K562 (cell line): ENCODE measurements at regions of chr17 and their contacts with region 1.

Region 1: GRCh38 chr17:45573924-45574770 is 83.6 kb upstream of the PLEKHM1 start:
- DNase-seq: peak in 3 of 4 experiments; percentile 4 to 8 (median 5)
- ATAC-seq: no peak
- H3K4me3 ChIP-seq: no peak overlapping the region
- H3K27ac ChIP-seq: no peak overlapping the region
- H3K4me1 ChIP-seq: no peaks in the 10 kb centered on the region; a peak in 1 of 5 replicates
- H3K27me3 ChIP-seq: no peaks in the 10 kb centered on the region
- CTCF ChIP-seq: no peak
- EP300 ChIP-seq: no peak
- POLR2A ChIP-seq: no peak
- RAD21 ChIP-seq: no peak

Region 2: DNA sequence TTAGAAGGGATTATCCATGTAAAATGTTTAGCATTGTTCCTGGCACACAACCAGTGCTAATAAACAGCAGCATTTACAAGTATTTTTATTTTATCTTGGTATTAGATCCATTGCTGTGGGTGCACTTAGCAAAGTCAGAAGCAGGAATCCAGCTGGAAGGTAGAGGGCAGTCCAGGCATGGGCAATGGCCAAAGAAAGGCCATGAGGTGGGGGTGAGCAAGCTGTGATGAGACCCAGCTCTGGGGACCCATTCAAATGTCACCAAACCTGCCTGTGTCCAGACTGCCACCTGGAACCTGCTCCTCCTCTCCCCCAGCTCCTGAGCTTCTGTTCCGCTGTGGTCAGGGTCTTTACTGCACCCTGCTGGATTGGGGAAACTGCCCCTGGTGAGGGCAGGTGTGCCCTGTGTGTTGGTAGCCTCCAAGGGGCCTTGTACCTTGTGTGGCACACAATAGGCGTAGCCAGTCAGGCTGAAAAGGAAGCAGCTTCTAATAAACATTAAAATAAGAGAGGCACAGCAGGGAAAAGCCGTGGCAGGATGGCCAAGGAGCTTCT is 92.0 kb after region 1 on chr17:
- CTCF ChIA-PET with region 1: no interaction called
- POLR2A ChIA-PET with region 1: no interaction called
- in situ Hi-C with region 1: no loop called
- intact Hi-C with region 1: no loop called
- DNase-seq: no peak
- ATAC-seq: peak; percentile 27; the same call in 1 of the 3 replicates
- H3K4me3 ChIP-seq: no peak overlapping the region
- H3K27ac ChIP-seq: no peak overlapping the region
- H3K4me1 ChIP-seq: no peaks in the 10 kb centered on the region
- H3K27me3 ChIP-seq: peaks cover 10 to 54% of the 10 kb centered on the region in 2 experiments
- CTCF ChIP-seq: peak; percentile 29 to 49 (median 49)
- EP300 ChIP-seq: no peak
- POLR2A ChIP-seq: no peak
- RAD21 ChIP-seq: peak in 1 of 2 experiments; percentile 70; a peak in 3 of 4 replicates

Region 3: GRCh38 chr17:46121841-46122485 is 547.8 kb after region 1 on chr17:
- CTCF ChIA-PET with region 1: no interaction called
- POLR2A ChIA-PET with region 1: no interaction called
- in situ Hi-C with region 1: loop called (anchors 10 kb)
- intact Hi-C with region 1: no loop called
- DNase-seq: no peak
- ATAC-seq: no peak
- H3K4me3 ChIP-seq: no peak overlapping the region
- H3K27ac ChIP-seq: no peak overlapping the region
- H3K4me1 ChIP-seq: peaks cover 0 to 23% of the 10 kb centered on the region in 2 experiments; a peak in 3 of 5 replicates
- H3K27me3 ChIP-seq: no peaks in the 10 kb centered on the region
- CTCF ChIP-seq: no peak
- EP300 ChIP-seq: no peak
- POLR2A ChIP-seq: no peak
- RAD21 ChIP-seq: no peak